CD14-positive monocyte (primary cell): ENCODE measurements at regions of chrX and their contacts with region 1.

Region 1: DNA sequence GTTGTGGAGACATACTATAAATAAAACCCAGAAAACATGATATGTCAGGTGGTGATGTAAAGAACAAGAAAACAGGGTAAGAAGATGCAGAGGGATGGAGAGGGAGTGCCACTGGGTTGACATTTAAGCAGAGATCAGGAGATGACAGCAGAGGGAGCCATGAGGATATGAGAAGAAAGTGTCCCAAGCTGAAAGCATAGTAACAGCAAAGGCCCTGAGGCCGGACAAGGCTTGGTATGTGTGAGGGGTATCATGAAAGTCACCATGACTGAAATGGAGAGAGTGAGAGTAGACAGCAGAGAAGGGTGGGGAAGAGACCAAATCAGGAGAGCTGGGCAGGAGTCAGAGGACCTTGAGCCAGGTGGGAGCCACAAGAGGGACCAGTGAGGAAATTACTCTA is 3.4 kb downstream of the GPKOW start:
- DNase-seq: no peak
- H3K4me3 ChIP-seq: no peak overlapping the region
- H3K4me3 Mint-ChIP-seq: no peak overlapping the region
- H3K27ac ChIP-seq: no peak overlapping the region
- H3K27ac Mint-ChIP-seq: peak overlapping the region in 2 of 7 donors; percentile 15 to 55
- H3K4me1 ChIP-seq: peaks cover 10 to 12% of the 10 kb centered on the region in 2 donors
- H3K4me1 Mint-ChIP-seq: peaks cover 9% of the 10 kb centered on the region
- H3K27me3 ChIP-seq: no peaks in the 10 kb centered on the region
- H3K27me3 Mint-ChIP-seq: peaks cover 0 to 12% (median 2%) of the 10 kb centered on the region in 3 donors
- CTCF ChIP-seq: no peak

Region 2: GRCh38 chrX:49163555-49164419 is 43.7 kb after region 1 on chrX:
- intact Hi-C with region 1: loop called (anchors 5 kb)
- DNase-seq: peak; percentile 77 to 86 (median 85)
- H3K4me3 ChIP-seq: peak overlapping the region; percentile 42 to 70 (median 49)
- H3K4me3 Mint-ChIP-seq: peak overlapping the region; percentile 79 to 82
- H3K27ac ChIP-seq: peak overlapping the region; percentile 81 to 88
- H3K27ac Mint-ChIP-seq: peak overlapping the region; percentile 94 to 99 (median 98)
- H3K4me1 ChIP-seq: peaks cover 42 to 47% of the 10 kb centered on the region in 2 donors
- H3K4me1 Mint-ChIP-seq: peaks cover 40% of the 10 kb centered on the region
- H3K27me3 ChIP-seq: no peaks in the 10 kb centered on the region
- H3K27me3 Mint-ChIP-seq: peaks cover 0 to 4% (median 0%) of the 10 kb centered on the region in 3 donors
- CTCF ChIP-seq: peak; percentile 67